ENCODE measurements at regions of chr17 and their contacts with region 1.

Region 1: GRCh38 chr17:48816774-48817590 is at the start of gene TTLL6:
- DNase-seq: peak; percentile 91
- CTCF ChIP-seq: no peak

Region 2: GRCh38 chr17:49031965-49032928 is 215.3 kb after region 1 on chr17:
- in situ Hi-C with region 1: loop called (anchors 25 kb)
- DNase-seq: peak; percentile 88
- CTCF ChIP-seq: peak; percentile 86

Region 3: GRCh38 chr17:49108318-49108717 is 291.3 kb after region 1 on chr17:
- in situ Hi-C with region 1: no loop called
- DNase-seq: no peak
- CTCF ChIP-seq: no peak

Region 4: GRCh38 chr17:49180303-49180702 is 363.3 kb after region 1 on chr17:
- in situ Hi-C with region 1: no loop called
- DNase-seq: peak; percentile 58
- CTCF ChIP-seq: peak; percentile 82